Activated CD4-positive, alpha-beta T cell treated with anti-CD3 and anti-CD28 coated beads, Interleukin-2, amount 10 ng/mL, durations not matched to agents 24 days and 14 days (primary cell): ENCODE measurements at regions of chr9 and their contacts with region 1.

Region 1: GRCh38 chr9:20622330-20623020 is at the start of gene MLLT3:
- DNase-seq: peak; percentile 99
- H3K4me3 Mint-ChIP-seq: peak within 1 kb of the TSS; percentile 92
- H3K27ac Mint-ChIP-seq: peak within 1 kb of the TSS; percentile 98
- H3K4me1 Mint-ChIP-seq: peaks cover 44% of the 10 kb centered on the region
- H3K27me3 Mint-ChIP-seq: no peaks in the 10 kb centered on the region
- total RNA-seq, gene MLLT3: 26.5 and 27.8 TPM in 2 replicates

Region 2: DNA sequence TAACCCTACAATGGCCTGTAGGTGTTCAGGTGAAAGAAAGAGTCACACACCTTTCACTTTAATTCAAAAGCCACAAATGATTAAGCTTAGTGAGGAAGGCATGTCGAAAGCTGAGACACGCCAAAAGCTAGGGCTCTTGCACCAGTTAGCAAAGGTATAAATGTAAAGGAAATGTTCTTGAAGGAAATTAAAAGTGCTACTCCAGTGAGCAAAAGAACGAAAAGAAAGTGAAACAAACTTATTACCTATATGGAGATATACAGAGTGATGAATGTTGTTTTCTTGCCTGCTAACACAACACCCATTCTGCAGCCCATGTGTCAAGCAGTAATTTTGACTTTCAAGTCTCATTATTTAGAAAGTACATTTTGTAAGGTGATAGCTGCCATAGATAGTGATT is 579.4 kb before region 1 on chr9:
- intact Hi-C with region 1: loop called (anchors 5 kb)
- DNase-seq: peak; percentile 68
- H3K4me3 Mint-ChIP-seq: peak overlapping the region; percentile 61
- H3K27ac Mint-ChIP-seq: peak overlapping the region; percentile 65
- H3K4me1 Mint-ChIP-seq: peaks cover 35% of the 10 kb centered on the region
- H3K27me3 Mint-ChIP-seq: no peaks in the 10 kb centered on the region

Region 3: GRCh38 chr9:20356403-20357035 is 266.0 kb before region 1 on chr9:
- intact Hi-C with region 1: loop called (anchors 1 kb)
- DNase-seq: peak; percentile 85
- H3K4me3 Mint-ChIP-seq: no peak overlapping the region
- H3K27ac Mint-ChIP-seq: peak overlapping the region; percentile 51
- H3K4me1 Mint-ChIP-seq: peaks cover 76% of the 10 kb centered on the region
- H3K27me3 Mint-ChIP-seq: no peaks in the 10 kb centered on the region

Region 4: GRCh38 chr9:20552874-20553575 is 69.5 kb before region 1 on chr9:
- intact Hi-C with region 1: loop called (anchors 1 kb)
- DNase-seq: peak; percentile 69
- H3K4me3 Mint-ChIP-seq: peak overlapping the region; percentile 57
- H3K27ac Mint-ChIP-seq: peak overlapping the region; percentile 82
- H3K4me1 Mint-ChIP-seq: peaks cover 67% of the 10 kb centered on the region
- H3K27me3 Mint-ChIP-seq: no peaks in the 10 kb centered on the region

Region 5: DNA sequence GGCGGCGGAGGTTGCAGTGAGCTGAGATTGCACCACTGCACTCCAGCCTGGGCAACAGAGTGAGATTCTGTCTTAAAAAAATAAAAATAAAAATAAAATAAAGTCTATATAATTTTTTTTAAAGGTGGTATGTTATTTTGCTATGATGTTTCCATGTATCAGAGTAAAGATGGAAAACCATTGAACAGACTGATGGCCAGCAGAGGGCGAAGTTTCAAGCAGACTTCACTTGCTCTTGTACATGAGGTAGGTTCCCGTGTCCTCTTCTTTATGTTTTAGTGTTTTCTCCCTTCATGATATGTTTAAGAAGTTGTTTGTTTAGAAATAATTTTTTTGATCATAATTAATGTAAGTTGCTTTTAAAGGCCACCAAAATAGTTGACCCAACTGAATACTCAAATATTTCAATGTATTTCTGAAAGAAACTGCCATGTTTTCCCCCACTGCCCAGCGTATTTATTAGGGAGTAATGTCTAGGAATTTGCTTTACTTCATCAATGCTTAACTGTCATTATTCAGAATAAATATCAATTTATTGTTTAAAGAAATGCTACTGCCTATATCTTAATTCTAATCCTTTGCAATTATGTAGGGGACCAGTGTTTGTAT is 262.6 kb after region 1 on chr9:
- intact Hi-C with region 1: loop called (anchors 5 kb)
- DNase-seq: peak; percentile 85
- H3K4me3 Mint-ChIP-seq: no peak overlapping the region
- H3K27ac Mint-ChIP-seq: no peak overlapping the region
- H3K4me1 Mint-ChIP-seq: peaks cover 1% of the 10 kb centered on the region
- H3K27me3 Mint-ChIP-seq: no peaks in the 10 kb centered on the region

Region 6: GRCh38 chr9:21096172-21096900 is 473.9 kb after region 1 on chr9:
- intact Hi-C with region 1: loop called (anchors 5 kb)
- DNase-seq: peak; percentile 85
- H3K4me3 Mint-ChIP-seq: peak overlapping the region; percentile 68
- H3K27ac Mint-ChIP-seq: peak overlapping the region; percentile 76
- H3K4me1 Mint-ChIP-seq: peaks cover 32% of the 10 kb centered on the region
- H3K27me3 Mint-ChIP-seq: no peaks in the 10 kb centered on the region